ENCODE measurements at regions of chr15 and their contacts with region 1.

Region 1: GRCh38 chr15:65318870-65319356 is 14.4 kb downstream of the RNU5B-1 start:
- DNase-seq: peak; percentile 82
- H3K4me3 ChIP-seq: no peak overlapping the region
- H3K27ac ChIP-seq: no peak overlapping the region
- H3K4me1 ChIP-seq: no peaks in the 10 kb centered on the region
- H3K27me3 ChIP-seq: no peaks in the 10 kb centered on the region
- CTCF ChIP-seq: peak; percentile 93 to 96 (median 94)
- EP300 ChIP-seq: no peak
- POLR2A ChIP-seq: no peak

Region 2: DNA sequence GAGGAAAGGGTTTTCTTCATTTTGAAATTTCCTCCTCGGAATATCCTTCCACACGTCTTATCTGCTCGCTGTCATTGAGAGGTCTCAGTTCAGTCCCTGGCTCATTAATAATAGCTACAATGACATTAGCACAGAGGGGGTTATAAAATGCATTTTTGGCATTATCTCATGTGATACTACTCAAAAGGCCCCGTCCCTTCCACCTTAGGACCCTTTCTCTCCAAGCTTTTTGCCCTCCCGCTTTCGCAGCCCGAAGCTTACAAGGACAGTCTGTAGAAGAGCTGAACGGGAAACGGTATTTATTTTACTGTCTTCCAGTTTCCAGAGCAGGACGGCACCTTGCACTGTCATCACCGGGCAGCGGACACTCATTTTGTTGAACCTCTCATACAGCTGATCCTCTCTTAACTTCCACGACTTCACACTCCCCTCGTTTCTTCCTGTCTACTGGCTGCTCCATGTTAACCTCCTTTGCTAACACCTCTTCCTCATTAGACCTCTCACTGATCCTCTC is 482.8 kb before region 1 on chr15:
- in situ Hi-C with region 1: no loop called
- intact Hi-C with region 1: no loop called
- DNase-seq: no peak
- H3K4me3 ChIP-seq: no peak overlapping the region
- H3K27ac ChIP-seq: peak overlapping the region; percentile 56 to 87 (median 71)
- H3K4me1 ChIP-seq: peaks cover 12 to 18% (median 14%) of the 10 kb centered on the region in 4 donors
- H3K27me3 ChIP-seq: peaks cover 3% of the 10 kb centered on the region
- CTCF ChIP-seq: no peak
- EP300 ChIP-seq: no peak
- POLR2A ChIP-seq: no peak

Region 3: DNA sequence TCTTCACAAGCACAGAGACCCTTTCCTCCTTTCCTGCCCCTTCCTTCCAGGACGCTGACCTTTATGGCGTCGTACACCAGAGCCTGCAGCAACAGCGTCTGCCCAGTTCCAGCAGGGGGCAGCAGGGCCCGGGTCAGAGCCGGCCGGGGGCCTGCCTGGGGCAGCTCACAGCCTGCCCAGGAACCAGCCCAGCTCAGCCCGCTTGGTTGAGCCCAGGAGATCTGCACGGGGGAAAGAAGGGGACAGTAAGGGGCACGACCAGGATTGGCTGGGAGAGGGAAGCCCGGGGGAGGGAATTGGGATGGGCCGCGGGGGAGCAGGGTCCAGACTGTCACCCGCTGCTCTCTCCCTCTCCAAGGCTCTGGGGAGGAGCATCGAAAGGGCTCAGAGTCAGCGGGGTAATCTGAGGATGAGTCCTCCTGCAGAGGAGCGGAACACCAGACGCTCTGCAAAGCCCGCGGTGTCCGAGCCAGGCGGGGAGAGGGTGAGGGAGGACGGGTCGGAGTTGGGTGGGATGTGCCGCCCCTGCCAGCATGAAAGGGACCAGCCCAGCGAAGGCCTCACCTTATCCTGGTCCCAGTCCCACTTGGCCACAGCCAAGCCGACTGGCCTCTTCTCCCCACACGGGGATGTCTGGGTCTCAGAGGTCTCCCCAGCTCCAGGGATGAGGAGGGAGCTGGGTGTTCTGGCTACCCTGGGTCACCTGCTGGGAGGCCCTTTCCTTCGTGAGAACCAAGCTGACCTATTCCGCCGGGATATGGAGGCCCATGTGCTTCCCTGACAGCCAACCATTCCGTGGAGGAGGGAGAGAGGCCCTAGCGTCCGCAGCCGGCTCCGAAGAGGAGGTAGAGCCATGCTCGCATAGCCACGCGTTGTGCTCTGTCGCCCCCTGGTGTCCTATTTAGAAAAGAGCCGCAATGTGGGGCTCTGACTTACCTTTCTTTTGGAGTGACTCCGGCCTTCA is 66.3 kb after region 1 on chr15:
- in situ Hi-C with region 1: loop called (anchors 5 kb)
- intact Hi-C with region 1: loop called (anchors 2 kb)
- DNase-seq: peak; percentile 87
- H3K4me3 ChIP-seq: peak overlapping the region in 3 of 4 donors; percentile 12 to 33 (median 24)
- H3K27ac ChIP-seq: peak overlapping the region in 2 of 4 donors; percentile 9 to 33
- H3K4me1 ChIP-seq: peaks cover 8 to 14% (median 10%) of the 10 kb centered on the region in 4 donors
- H3K27me3 ChIP-seq: peaks cover 24% of the 10 kb centered on the region
- CTCF ChIP-seq: peak; percentile 83 to 91 (median 89)
- EP300 ChIP-seq: no peak
- POLR2A ChIP-seq: no peak

Region 4: DNA sequence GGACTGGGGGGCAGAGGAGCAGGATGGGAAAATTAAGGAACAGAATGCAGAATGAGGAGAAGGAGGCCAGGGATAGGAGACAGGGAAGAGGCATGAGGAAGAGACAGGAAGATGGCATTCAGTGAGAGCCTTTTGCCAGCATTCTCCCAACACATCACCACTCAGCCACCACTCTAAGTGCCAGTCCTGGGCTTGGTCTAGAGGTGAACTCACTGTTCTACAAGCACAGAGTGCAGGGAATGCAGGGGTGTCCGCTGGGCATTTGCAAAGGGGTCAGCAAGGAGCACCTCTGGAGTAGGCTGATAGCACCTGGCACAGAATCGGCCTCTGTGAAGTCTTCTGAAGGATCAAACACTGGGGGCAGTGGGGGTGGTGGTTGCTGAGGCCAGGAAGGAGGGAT is 73.5 kb after region 1 on chr15:
- in situ Hi-C with region 1: loop called in 2 of 4 experiments (anchors 5 kb)
- intact Hi-C with region 1: no loop called
- DNase-seq: no peak
- H3K4me3 ChIP-seq: no peak overlapping the region
- H3K27ac ChIP-seq: no peak overlapping the region
- H3K4me1 ChIP-seq: no peaks in the 10 kb centered on the region
- H3K27me3 ChIP-seq: peaks cover 49% of the 10 kb centered on the region
- CTCF ChIP-seq: no peak
- EP300 ChIP-seq: no peak
- POLR2A ChIP-seq: no peak

Measured in transverse colon (tissue), 4 donors.